MCF 10A (cell line): ENCODE measurements at regions of chr20 and their contacts with region 1.

Region 1: DNA sequence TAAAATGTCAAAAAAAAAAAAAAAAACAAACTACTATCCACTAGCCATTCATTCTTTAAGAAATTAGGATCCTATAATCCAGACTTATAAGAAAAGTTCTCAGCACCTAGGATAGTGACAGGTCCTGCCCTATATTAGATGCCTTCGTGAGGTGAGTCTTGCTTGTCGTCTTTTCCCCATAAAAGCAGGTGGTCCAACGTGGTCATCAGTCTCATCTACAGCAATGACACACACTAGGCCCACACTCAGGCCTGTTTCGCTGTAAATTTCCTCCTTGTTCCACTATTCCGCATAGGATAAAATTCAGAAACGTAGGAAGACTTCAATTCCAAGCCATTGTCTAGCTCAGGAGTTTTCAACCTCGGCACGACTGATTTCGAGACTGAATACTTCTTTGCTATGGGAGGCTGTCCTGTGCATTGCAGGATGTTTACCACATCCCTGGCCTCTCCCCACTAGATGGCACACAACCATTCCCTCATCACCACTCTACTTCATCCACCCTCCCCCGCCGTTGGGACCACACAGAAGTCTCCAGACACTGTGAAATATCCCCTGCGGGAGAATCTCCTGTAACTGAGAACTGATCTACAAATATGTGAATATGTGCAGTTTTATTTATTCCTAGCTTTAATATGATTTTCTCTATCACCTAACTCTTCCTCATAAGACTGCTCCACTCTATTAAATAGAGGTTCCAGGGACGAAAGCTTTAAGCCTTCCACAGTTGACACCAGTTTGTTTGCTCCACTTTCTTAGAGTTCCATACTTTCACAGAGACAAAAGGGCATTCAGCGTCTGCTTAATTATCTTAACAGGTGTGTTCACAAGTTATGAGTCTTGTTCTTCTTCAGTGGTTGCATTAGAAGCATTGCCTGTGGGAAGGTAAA is 346.3 kb downstream of the BMP2 start:
- DNase-seq: peak; percentile 70
- H3K4me3 Mint-ChIP-seq: no peak overlapping the region
- H3K27ac Mint-ChIP-seq: no peak overlapping the region
- H3K4me1 Mint-ChIP-seq: peaks cover 8% of the 10 kb centered on the region
- H3K27me3 Mint-ChIP-seq: no peaks in the 10 kb centered on the region
- CTCF ChIP-seq: peak; percentile 67

Region 2: GRCh38 chr20:7094438-7094997 is 19.3 kb before region 1 on chr20:
- CTCF ChIA-PET with region 1: interaction called, 15 read pairs
- POLR2A ChIA-PET with region 1: no interaction called
- intact Hi-C with region 1: no loop called
- DNase-seq: peak; percentile 65
- H3K4me3 Mint-ChIP-seq: no peak overlapping the region
- H3K27ac Mint-ChIP-seq: no peak overlapping the region
- H3K4me1 Mint-ChIP-seq: no peaks in the 10 kb centered on the region
- H3K27me3 Mint-ChIP-seq: no peaks in the 10 kb centered on the region
- CTCF ChIP-seq: peak; percentile 63

Region 3: GRCh38 chr20:7161690-7162089 is 47.9 kb after region 1 on chr20:
- CTCF ChIA-PET with region 1: interaction called, 10 read pairs
- POLR2A ChIA-PET with region 1: no interaction called
- intact Hi-C with region 1: no loop called
- DNase-seq: peak; percentile 45
- H3K4me3 Mint-ChIP-seq: no peak overlapping the region
- H3K27ac Mint-ChIP-seq: no peak overlapping the region
- H3K4me1 Mint-ChIP-seq: peaks cover 9% of the 10 kb centered on the region
- H3K27me3 Mint-ChIP-seq: no peaks in the 10 kb centered on the region
- CTCF ChIP-seq: peak; percentile 37

Region 4: DNA sequence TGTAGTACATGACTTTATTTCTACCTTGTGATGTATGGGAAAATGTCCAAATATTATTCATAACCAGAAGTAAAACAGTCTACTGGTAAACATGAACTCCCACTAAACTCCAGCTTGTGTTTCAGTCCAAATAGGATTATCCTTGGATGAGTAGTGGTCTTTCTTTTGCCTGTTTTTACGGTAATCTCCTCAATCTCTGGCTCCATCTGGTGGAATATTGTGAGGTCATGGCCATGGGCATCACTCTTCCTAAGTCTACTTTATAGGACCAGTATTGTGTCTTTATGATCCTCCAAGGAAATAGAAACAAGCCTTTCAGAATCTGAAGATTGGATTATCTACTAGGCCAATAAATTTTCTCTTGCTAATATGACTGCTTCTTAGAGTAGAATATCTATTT is 158.7 kb after region 1 on chr20:
- CTCF ChIA-PET with region 1: interaction called, 6 read pairs
- POLR2A ChIA-PET with region 1: no interaction called
- intact Hi-C with region 1: loop called (anchors 5 kb)
- DNase-seq: peak; percentile 18
- H3K4me3 Mint-ChIP-seq: no peak overlapping the region
- H3K27ac Mint-ChIP-seq: no peak overlapping the region
- H3K4me1 Mint-ChIP-seq: no peaks in the 10 kb centered on the region
- H3K27me3 Mint-ChIP-seq: no peaks in the 10 kb centered on the region
- CTCF ChIP-seq: peak; percentile 35

Region 5: DNA sequence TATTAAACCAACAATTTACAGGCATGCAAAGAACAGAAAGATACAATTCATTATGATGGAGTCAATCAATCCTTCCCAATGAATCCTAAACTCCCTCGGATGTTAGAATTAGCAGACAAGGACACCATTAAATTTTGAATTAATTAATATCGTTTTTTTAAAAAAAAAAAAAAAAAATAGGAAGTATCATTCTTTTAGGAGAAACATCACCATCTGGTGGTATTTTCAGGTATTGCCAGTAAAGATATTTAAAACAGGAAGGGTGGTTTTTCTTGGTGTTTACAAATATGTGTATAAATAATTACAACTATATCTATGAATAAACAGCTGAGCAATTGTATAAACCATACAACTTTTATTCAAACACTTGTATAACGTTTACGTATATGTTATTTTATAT is 262.1 kb after region 1 on chr20:
- CTCF ChIA-PET with region 1: interaction called, 14 read pairs
- POLR2A ChIA-PET with region 1: interaction called, 3 read pairs
- intact Hi-C with region 1: loop called (anchors 5 kb)
- DNase-seq: peak; percentile 53
- H3K4me3 Mint-ChIP-seq: no peak overlapping the region
- H3K27ac Mint-ChIP-seq: no peak overlapping the region
- H3K4me1 Mint-ChIP-seq: no peaks in the 10 kb centered on the region
- H3K27me3 Mint-ChIP-seq: no peaks in the 10 kb centered on the region
- CTCF ChIP-seq: peak; percentile 35

Region 6: GRCh38 chr20:7926767-7927166 is 812.9 kb after region 1 on chr20:
- CTCF ChIA-PET with region 1: interaction called, 3 read pairs
- POLR2A ChIA-PET with region 1: no interaction called
- intact Hi-C with region 1: loop called (anchors 5 kb)
- DNase-seq: peak; percentile 50
- H3K4me3 Mint-ChIP-seq: no peak overlapping the region
- H3K27ac Mint-ChIP-seq: no peak overlapping the region
- H3K4me1 Mint-ChIP-seq: peaks cover 9% of the 10 kb centered on the region
- H3K27me3 Mint-ChIP-seq: no peaks in the 10 kb centered on the region
- CTCF ChIP-seq: peak; percentile 59